K562 (cell line): ENCODE measurements at regions of chr17 and their contacts with region 1.

Region 1: GRCh38 chr17:8173056-8173870 is 2.9 kb downstream of the TMEM107 start:
- DNase-seq: peak; percentile 45 to 93 (median 62)
- ATAC-seq: peak; percentile 80
- H3K4me3 ChIP-seq: peak overlapping the region; percentile 27
- H3K27ac ChIP-seq: peak overlapping the region; percentile 99
- H3K4me1 ChIP-seq: peaks cover 23 to 56% of the 10 kb centered on the region in 2 experiments; a peak in 4 of 5 replicates
- H3K27me3 ChIP-seq: no peaks in the 10 kb centered on the region
- CTCF ChIP-seq: peak in 1 of 3 experiments; percentile 8; a peak in 2 of 6 replicates
- EP300 ChIP-seq: peak; percentile 70
- POLR2A ChIP-seq: peak; percentile 100
- RAD21 ChIP-seq: peak in 1 of 2 experiments; percentile 37; a peak in 3 of 4 replicates

Region 2: DNA sequence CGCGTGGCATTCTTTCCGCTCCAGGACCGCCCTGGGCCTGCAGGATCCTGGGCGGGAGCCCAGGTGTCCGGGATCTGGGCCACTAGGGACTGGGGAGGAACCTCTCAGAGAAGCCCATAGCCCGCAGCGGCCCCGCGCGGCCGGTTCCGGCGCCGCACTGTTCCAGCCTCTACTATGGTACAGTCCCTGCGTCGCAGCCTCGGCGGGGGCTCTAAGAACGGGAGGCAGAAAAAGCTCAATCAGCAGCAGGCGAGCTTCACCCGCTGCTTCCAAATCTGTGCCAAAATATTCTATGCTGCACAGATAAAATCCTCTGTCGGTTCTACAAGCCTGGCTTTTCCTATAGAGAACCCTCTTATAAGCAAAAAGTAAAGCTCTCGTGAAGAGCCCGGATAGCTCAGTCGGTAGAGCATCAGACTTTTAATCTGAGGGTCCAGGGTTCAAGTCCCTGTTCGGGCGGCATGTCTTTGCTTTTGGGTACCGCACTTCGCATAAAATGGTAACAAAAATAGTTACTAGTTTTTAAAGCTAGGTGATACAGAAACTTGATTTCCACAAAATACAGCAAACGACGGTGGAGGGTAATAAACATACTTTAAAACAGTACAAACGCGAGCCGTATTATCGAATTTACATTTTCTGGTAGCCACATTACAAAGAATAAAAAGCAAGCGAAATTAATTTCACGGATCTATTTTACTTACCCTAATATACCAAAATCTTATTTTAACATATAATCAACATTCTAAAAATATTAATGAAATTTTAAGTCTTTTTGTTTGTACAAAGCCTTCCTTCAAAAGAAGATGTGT is 54.3 kb before region 1 on chr17:
- CTCF ChIA-PET with region 1: no interaction called
- POLR2A ChIA-PET with region 1: interaction called, 9 read pairs
- in situ Hi-C with region 1: no loop called
- intact Hi-C with region 1: loop called (anchors 5 kb)
- DNase-seq: peak; percentile 73 to 85 (median 76)
- ATAC-seq: peak; percentile 81
- H3K4me3 ChIP-seq: peak overlapping the region; percentile 65
- H3K27ac ChIP-seq: peak overlapping the region; percentile 63; the same call in 2 of the 3 replicates
- H3K4me1 ChIP-seq: peaks cover 20 to 43% of the 10 kb centered on the region in 2 experiments
- H3K27me3 ChIP-seq: peaks cover 14 to 41% of the 10 kb centered on the region in 2 experiments
- CTCF ChIP-seq: peak; percentile 77 to 89 (median 87)
- EP300 ChIP-seq: peak; percentile 32; the same call in 1 of the 2 replicates
- POLR2A ChIP-seq: no peak
- RAD21 ChIP-seq: peak; percentile 52 to 68

Region 3: GRCh38 chr17:8138672-8139371 is 34.4 kb before region 1 on chr17:
- CTCF ChIA-PET with region 1: no interaction called
- POLR2A ChIA-PET with region 1: interaction called, 14 read pairs
- in situ Hi-C with region 1: no loop called
- intact Hi-C with region 1: loop called (anchors 5 kb)
- DNase-seq: peak; percentile 73 to 94 (median 77)
- ATAC-seq: peak; percentile 95
- H3K4me3 ChIP-seq: peak overlapping the region; percentile 59
- H3K27ac ChIP-seq: peak overlapping the region; percentile 95
- H3K4me1 ChIP-seq: peaks cover 6 to 28% of the 10 kb centered on the region in 2 experiments; a peak in 4 of 5 replicates
- H3K27me3 ChIP-seq: no peaks in the 10 kb centered on the region
- CTCF ChIP-seq: peak; percentile 84 to 98 (median 96)
- EP300 ChIP-seq: peak; percentile 42; the same call in 1 of the 2 replicates
- POLR2A ChIP-seq: no peak; the same call in 1 of the 2 replicates
- RAD21 ChIP-seq: peak; percentile 75 to 77

Region 4: GRCh38 chr17:8156246-8156992 is 16.8 kb before region 1 on chr17:
- CTCF ChIA-PET with region 1: no interaction called
- POLR2A ChIA-PET with region 1: interaction called, 105 read pairs
- in situ Hi-C with region 1: no loop called
- intact Hi-C with region 1: no loop called
- DNase-seq: peak; percentile 88 to 99 (median 92)
- ATAC-seq: peak; percentile 83
- H3K4me3 ChIP-seq: peak overlapping the region; percentile 52
- H3K27ac ChIP-seq: peak overlapping the region; percentile 86
- H3K4me1 ChIP-seq: peaks cover 42 to 68% of the 10 kb centered on the region in 2 experiments
- H3K27me3 ChIP-seq: no peaks in the 10 kb centered on the region
- CTCF ChIP-seq: peak; percentile 30 to 43 (median 43); a peak in 4 of 6 replicates
- EP300 ChIP-seq: peak; percentile 30; the same call in 1 of the 2 replicates
- POLR2A ChIP-seq: peak; percentile 71
- RAD21 ChIP-seq: peak in 1 of 2 experiments; percentile 5; a peak in 1 of 4 replicates

Region 5: GRCh38 chr17:8204761-8205555 is 31.7 kb after region 1 on chr17:
- CTCF ChIA-PET with region 1: no interaction called
- POLR2A ChIA-PET with region 1: interaction called, 13 read pairs
- in situ Hi-C with region 1: no loop called
- intact Hi-C with region 1: no loop called
- DNase-seq: no peak
- ATAC-seq: no peak; the same call in 2 of the 3 replicates
- H3K4me3 ChIP-seq: no peak overlapping the region
- H3K27ac ChIP-seq: no peak overlapping the region
- H3K4me1 ChIP-seq: peaks cover 3 to 18% of the 10 kb centered on the region in 2 experiments; a peak in 4 of 5 replicates
- H3K27me3 ChIP-seq: no peaks in the 10 kb centered on the region
- CTCF ChIP-seq: no peak
- EP300 ChIP-seq: no peak
- POLR2A ChIP-seq: peak; percentile 54
- RAD21 ChIP-seq: no peak

Region 6: GRCh38 chr17:8222630-8223356 is 49.5 kb after region 1 on chr17:
- CTCF ChIA-PET with region 1: no interaction called
- POLR2A ChIA-PET with region 1: interaction called, 12 read pairs
- in situ Hi-C with region 1: no loop called
- intact Hi-C with region 1: no loop called
- DNase-seq: peak; percentile 50 to 90 (median 60)
- ATAC-seq: peak; percentile 54
- H3K4me3 ChIP-seq: peak overlapping the region; percentile 60
- H3K27ac ChIP-seq: peak overlapping the region; percentile 91
- H3K4me1 ChIP-seq: peaks cover 27 to 30% of the 10 kb centered on the region in 2 experiments; a peak in 4 of 5 replicates
- H3K27me3 ChIP-seq: no peaks in the 10 kb centered on the region
- CTCF ChIP-seq: no peak
- EP300 ChIP-seq: no peak
- POLR2A ChIP-seq: peak; percentile 85
- RAD21 ChIP-seq: no peak